ENCODE measurements at regions of chr12 and their contacts with region 1.

Region 1: DNA sequence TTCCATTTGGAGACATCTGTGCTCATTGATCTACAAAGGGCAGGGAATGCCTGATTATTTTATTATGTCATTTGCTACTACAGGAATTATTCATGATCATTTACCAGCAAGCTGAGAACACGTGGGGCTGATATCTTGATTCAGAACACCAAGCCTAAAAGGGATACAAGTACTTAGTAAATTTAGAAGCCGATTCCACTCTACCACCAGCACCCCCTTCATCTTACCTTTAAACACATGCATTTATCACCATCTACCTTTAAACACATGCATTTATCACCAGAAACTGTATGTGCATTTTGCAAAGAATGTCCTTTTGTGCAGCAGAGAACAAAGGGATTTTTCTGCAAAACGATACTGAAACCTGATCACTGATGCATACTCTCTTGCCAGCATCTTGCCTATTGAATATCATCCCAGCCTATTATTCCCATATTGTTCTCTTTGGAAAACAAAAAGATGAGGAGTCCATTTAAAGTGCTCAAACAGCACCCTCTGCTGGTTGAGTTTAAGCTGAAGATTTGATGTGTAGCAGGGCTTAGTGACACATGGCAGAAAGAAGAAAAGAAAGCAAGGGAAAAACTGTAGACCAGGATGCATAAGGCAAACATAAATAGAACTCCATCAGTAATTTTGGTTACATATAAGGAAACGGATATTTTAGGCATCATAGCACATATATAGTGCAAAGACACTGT is 132.6 kb upstream of the PLEKHG7 start:
- DNase-seq: no peak
- ATAC-seq: peak; percentile 79

Region 2: GRCh38 chr12:91382081-91382543 is 1188.1 kb before region 1 on chr12:
- intact Hi-C with region 1: loop called (anchors 2 kb)
- DNase-seq: peak; percentile 78
- ATAC-seq: peak; percentile 89

Region 3: DNA sequence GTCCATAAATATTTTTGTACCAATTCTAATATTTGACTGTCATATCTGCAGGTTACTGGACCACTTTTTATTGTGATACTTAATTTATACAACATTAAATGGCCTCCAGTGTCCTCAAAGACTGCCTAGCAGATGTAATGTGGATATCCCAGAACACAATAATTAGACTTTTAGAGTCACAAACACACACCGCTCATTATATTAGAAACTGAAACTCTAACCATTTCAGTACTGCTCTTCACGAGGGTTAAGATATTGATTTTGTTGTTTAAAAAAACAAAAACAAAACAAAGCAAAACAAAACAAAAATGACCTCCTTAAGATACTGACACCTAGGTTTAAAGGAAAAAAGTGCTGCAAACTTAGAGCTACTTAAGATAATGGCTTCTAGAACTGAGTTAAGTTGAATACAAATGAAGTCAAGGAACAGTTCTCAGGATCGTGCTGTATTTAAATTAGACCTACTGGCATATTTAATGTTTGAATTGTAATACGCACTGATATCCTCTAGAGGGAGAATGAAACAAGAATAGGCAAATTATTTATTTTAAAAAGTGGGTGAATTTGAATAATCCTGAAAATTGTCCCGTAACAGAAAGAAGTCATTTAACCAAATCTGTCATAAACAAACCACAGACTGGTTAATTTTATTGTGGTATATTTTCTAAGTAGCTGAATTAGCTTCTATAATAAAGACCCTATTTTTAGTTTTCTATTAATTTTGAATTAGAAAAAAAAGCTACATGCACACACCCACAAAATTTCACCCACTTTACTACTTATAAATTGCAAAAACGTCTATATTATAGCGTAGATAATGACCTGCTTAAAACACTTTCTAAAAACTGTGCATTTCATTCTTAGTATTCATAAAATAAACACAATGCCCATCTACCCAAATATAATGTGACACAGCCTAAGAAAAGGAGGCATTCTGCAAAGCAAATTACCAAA is 992.3 kb before region 1 on chr12:
- intact Hi-C with region 1: loop called (anchors 5 kb)
- DNase-seq: no peak
- ATAC-seq: peak; percentile 50

Region 4: GRCh38 chr12:91811481-91812287 is 758.5 kb before region 1 on chr12:
- intact Hi-C with region 1: loop called (anchors 5 kb)
- DNase-seq: peak; percentile 77
- ATAC-seq: peak; percentile 71

Region 5: GRCh38 chr12:92059976-92060375 is 510.2 kb before region 1 on chr12:
- intact Hi-C with region 1: no loop called
- DNase-seq: no peak
- ATAC-seq: no peak

Region 6: GRCh38 chr12:92244036-92244435 is 326.2 kb before region 1 on chr12:
- intact Hi-C with region 1: loop called (anchors 5 kb)
- DNase-seq: no peak
- ATAC-seq: peak; percentile 91

Region 7: GRCh38 chr12:92414170-92415070 is 155.8 kb before region 1 on chr12:
- intact Hi-C with region 1: loop called (anchors 5 kb)
- DNase-seq: no peak
- ATAC-seq: no peak

Region 8: DNA sequence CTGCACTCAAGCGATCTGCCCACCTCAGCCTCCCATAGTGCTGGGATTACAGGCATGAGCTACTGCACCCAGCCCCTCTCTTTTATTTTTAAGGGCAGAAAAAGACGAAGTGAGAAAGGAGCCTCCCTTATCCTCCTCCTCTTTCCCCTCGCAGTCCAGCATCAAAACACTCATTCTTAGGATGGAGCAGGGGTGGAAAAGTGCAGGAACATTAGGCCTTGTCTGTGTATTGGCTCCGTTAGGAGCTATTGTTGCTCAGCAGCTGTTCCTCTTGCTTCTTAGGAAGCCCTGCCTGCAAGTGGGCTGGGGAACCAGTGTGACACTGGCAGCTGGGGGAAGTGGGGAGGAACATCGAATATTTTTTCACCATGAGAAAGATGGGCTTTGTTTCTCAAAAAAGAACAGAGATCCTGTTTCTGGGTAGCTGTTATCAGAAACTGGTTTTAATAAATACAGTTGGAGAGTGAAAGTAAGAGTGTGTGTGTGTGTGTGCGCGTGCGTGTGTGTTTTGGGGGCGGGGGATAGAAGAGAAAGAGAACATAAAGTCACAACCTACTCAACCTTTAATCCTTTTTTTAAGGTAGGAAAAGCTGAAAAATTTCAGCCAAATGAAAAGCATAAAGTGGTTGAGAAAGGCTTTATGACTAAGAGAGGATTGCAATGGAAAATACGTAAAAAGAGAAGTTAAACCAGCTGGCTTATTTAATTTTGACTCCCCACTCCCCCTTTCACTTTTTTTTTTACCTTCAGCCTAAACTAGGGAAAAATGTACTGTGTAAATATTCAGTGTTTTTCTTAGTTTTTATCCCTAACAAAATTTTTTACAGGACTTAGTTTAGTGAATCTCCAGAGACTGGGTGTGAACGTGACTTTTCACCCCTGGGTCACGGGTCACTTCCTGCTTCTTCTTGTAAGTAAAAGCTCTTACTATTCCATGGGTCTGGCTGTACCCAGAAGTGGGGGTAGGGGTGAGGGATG is 64.7 kb before region 1 on chr12:
- intact Hi-C with region 1: loop called (anchors 2 kb)
- DNase-seq: peak; percentile 78
- ATAC-seq: peak; percentile 55

Region 9: DNA sequence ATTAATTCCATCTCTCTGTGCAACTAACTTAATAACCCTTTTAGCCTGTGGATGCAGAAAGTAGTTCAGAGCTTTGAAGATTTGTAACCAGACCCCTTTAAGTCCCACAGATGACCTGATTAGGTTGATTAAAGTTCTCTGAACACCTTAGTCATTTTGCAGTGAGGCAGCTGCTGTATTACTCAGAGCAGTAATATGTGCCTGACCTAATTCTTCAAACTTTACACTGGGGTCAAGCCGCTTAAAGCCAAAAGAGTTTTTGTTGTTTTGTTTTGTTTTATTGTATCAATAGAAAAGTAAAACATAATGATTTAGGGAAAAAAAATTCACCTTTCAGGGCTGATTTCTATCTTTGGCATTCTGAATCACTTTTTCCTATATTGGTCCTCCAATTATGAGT is 54.0 kb after region 1 on chr12:
- intact Hi-C with region 1: no loop called
- DNase-seq: no peak
- ATAC-seq: no peak

Region 10: GRCh38 chr12:92821142-92821541 is 250.9 kb after region 1 on chr12:
- intact Hi-C with region 1: no loop called
- DNase-seq: no peak
- ATAC-seq: no peak

Measured in Right ventricle myocardium inferior (tissue), 1 donor.